Left ventricle myocardium inferior (tissue), 1 donor: ENCODE measurements at regions of chr15 and their contacts with region 1.

Region 1: GRCh38 chr15:82849556-82850512 is 40.4 kb downstream of the WHAMM start:
- DNase-seq: peak; percentile 76
- H3K4me3 ChIP-seq: peak overlapping the region; percentile 43
- H3K27ac ChIP-seq: peak overlapping the region; percentile 47
- H3K4me1 ChIP-seq: peaks cover 15% of the 10 kb centered on the region
- H3K27me3 ChIP-seq: no peaks in the 10 kb centered on the region
- CTCF ChIP-seq: peak; percentile 82

Region 2: GRCh38 chr15:82789491-82789890 is 60.3 kb before region 1 on chr15:
- intact Hi-C with region 1: no loop called
- DNase-seq: no peak
- H3K4me3 ChIP-seq: no peak overlapping the region
- H3K27ac ChIP-seq: no peak overlapping the region
- H3K4me1 ChIP-seq: no peaks in the 10 kb centered on the region
- H3K27me3 ChIP-seq: no peaks in the 10 kb centered on the region
- CTCF ChIP-seq: no peak

Region 3: DNA sequence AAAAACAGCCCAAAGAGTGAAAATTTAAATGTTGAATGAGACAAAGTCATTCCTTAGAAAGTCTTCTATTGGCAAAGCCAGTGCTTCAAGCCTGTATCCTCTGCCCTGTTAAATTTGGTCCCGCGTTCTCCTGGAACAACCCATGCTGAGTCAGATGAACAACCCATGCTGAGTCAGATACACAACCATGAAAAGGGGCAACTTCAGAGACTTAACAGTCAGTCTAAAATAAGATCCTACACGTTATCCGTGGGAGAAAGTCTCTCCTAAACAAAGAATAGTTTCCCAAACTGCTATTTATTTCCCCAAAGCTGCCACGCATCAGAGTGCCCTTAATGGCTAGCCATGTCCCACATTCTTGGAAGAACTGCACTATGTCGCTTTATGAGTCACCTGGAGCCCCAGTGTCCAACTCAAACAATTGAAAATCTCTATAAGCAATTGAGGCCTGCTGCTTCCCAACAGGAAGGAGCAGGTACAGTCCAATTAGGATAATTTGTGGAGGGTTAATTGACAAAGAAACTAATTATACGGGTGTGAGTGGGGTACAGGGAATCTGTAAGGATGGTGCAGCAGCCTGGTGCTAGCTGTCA is 25.7 kb after region 1 on chr15:
- intact Hi-C with region 1: no loop called
- DNase-seq: no peak
- H3K4me3 ChIP-seq: no peak overlapping the region
- H3K27ac ChIP-seq: no peak overlapping the region
- H3K4me1 ChIP-seq: peaks cover 26% of the 10 kb centered on the region
- H3K27me3 ChIP-seq: no peaks in the 10 kb centered on the region
- CTCF ChIP-seq: no peak

Region 4: DNA sequence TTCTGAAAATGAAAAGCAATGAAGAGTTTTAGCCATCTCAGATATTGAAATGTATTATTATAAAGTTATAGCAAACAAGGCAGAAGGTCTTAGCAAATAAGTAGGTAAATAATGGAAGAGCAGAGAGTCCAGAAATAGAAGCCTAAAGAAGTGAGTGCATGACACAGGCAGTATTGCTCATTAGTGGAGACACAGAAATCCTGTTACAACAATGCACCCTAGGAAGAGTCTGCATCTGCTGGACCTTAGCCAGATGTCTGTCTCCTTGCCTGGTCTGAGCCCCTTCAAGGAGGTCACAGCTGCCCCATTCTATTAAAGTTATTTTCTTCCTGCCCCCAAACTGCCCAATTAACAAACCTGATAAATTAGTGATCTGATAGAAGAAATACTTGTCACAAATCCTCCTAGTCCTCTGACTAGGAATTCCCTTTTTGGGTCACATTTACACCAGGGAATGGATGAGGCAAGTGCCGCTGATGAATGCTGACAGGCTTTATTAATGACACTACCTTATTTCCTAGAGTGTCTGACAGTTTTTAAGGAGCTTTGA is 50.8 kb after region 1 on chr15:
- intact Hi-C with region 1: loop called (anchors 5 kb)
- DNase-seq: no peak
- H3K4me3 ChIP-seq: no peak overlapping the region
- H3K27ac ChIP-seq: no peak overlapping the region
- H3K4me1 ChIP-seq: peaks cover 23% of the 10 kb centered on the region
- H3K27me3 ChIP-seq: no peaks in the 10 kb centered on the region
- CTCF ChIP-seq: no peak

Region 5: GRCh38 chr15:82999905-83000671 is 150.3 kb after region 1 on chr15:
- intact Hi-C with region 1: loop called (anchors 5 kb)
- DNase-seq: no peak
- H3K4me3 ChIP-seq: peak overlapping the region; percentile 33
- H3K27ac ChIP-seq: no peak overlapping the region
- H3K4me1 ChIP-seq: peaks cover 7% of the 10 kb centered on the region
- H3K27me3 ChIP-seq: no peaks in the 10 kb centered on the region
- CTCF ChIP-seq: peak; percentile 63